Activated CD4-positive, alpha-beta memory T cell treated with anti-CD3 and anti-CD28 coated beads for 36 hours (primary cell): ENCODE measurements at regions of chr2 and their contacts with region 1.

Region 1: DNA sequence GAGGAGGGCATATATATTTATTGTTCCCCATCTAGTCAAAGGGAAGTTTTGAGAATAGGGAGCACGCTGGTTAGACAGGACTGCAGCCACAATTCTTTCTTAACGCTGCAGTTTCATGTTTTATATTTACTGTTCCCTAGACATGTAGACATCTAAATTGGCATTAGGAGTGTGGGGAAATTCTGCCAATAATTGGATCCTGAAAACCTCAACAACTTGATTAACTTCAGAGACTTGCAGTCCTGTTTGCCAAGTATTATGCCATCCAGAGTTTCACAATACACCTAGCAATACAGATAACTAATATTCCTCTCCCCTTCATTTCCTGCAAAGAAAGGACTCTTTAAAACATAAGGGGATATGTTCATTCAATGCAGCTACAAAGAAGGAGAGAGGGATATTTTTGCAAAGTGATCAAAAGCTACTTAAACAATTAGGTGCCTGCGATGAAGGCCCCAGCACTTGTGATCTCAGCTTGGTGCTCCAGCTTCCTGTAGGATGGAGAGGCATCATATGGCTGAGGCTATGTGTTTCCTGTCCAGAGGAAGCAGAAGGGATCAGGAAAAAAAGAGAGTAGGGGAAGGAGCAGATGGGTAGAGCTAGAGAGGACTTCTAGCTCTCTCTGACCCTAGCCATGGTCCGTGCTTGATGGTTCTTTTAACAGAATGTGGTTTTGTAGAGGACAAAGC is 264.4 kb downstream of the MTX2 start:
- DNase-seq: no peak
- H3K4me3 Mint-ChIP-seq: no peak overlapping the region
- H3K27ac Mint-ChIP-seq: no peak overlapping the region
- H3K4me1 Mint-ChIP-seq: no peaks in the 10 kb centered on the region
- H3K27me3 Mint-ChIP-seq: peaks cover 15% of the 10 kb centered on the region

Region 2: DNA sequence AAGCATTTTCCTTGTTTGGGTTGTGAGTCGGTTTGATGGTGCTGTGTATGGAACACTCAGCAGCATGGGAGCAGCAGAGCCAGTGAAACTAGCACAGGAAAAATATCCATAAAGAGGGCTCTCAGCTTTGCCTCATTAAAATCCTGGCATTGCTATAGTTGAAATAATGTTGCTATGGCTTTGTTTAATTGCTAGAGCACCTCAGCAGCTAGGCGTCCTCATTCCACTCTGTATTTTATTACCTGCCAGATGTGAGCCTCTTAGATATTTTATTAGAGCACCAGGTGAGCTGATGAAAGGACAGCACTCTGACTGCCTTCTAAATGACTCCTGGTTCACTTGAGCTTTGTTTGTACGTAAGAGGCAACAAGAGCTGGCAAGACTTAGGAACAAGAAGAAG is 32.0 kb before region 1 on chr2:
- CTCF ChIA-PET with region 1: no interaction called
- POLR2A ChIA-PET with region 1: no interaction called
- intact Hi-C with region 1: loop called (anchors 2 kb)
- DNase-seq: no peak
- H3K4me3 Mint-ChIP-seq: no peak overlapping the region
- H3K27ac Mint-ChIP-seq: no peak overlapping the region
- H3K4me1 Mint-ChIP-seq: no peaks in the 10 kb centered on the region
- H3K27me3 Mint-ChIP-seq: peaks cover 29% of the 10 kb centered on the region